Right cardiac atrium (tissue), 5 donors: ENCODE measurements at regions of chr14 and their contacts with region 1.

Region 1: GRCh38 chr14:22505697-22506377 is 83.2 kb downstream of the DAD1 start:
- DNase-seq: no peak
- ATAC-seq: no peak
- H3K4me3 ChIP-seq: no peak overlapping the region
- H3K27ac ChIP-seq: peak overlapping the region; percentile 80
- H3K4me1 ChIP-seq: no peaks in the 10 kb centered on the region
- H3K27me3 ChIP-seq: no peaks in the 10 kb centered on the region

Region 2: GRCh38 chr14:22549981-22550673 is 44.3 kb after region 1 on chr14:
- intact Hi-C with region 1: loop called in 1 of 4 experiments (anchors 5 kb)
- DNase-seq: no peak
- ATAC-seq: no peak
- H3K4me3 ChIP-seq: no peak overlapping the region
- H3K27ac ChIP-seq: no peak overlapping the region
- H3K4me1 ChIP-seq: peaks cover 11% of the 10 kb centered on the region
- H3K27me3 ChIP-seq: no peaks in the 10 kb centered on the region